OCI-LY7 (cell line): ENCODE measurements at regions of chr1 and their contacts with region 1.

Region 1: GRCh38 chr1:225977937-225978748 is 21.0 kb downstream of the SDE2 start:
- DNase-seq: peak; percentile 63
- H3K4me3 ChIP-seq: no peak overlapping the region
- H3K27ac ChIP-seq: peak overlapping the region; percentile 24
- H3K4me1 ChIP-seq: peaks cover 19% of the 10 kb centered on the region
- CTCF ChIP-seq: peak; percentile 52; the same call in 1 of the 2 replicates

Region 2: GRCh38 chr1:225318706-225319575 is 659.2 kb before region 1 on chr1:
- CTCF ChIA-PET with region 1: no interaction called
- POLR2A ChIA-PET with region 1: no interaction called
- intact Hi-C with region 1: loop called (anchors 2 kb)
- DNase-seq: peak; percentile 66
- H3K4me3 ChIP-seq: no peak overlapping the region
- H3K27ac ChIP-seq: no peak overlapping the region
- H3K4me1 ChIP-seq: no peaks in the 10 kb centered on the region
- CTCF ChIP-seq: peak; percentile 94

Region 3: GRCh38 chr1:225554216-225554812 is 423.8 kb before region 1 on chr1:
- CTCF ChIA-PET with region 1: no interaction called
- POLR2A ChIA-PET with region 1: no interaction called
- intact Hi-C with region 1: loop called (anchors 2 kb)
- DNase-seq: peak; percentile 56
- H3K4me3 ChIP-seq: no peak overlapping the region
- H3K27ac ChIP-seq: no peak overlapping the region
- H3K4me1 ChIP-seq: no peaks in the 10 kb centered on the region
- CTCF ChIP-seq: peak; percentile 94

Region 4: DNA sequence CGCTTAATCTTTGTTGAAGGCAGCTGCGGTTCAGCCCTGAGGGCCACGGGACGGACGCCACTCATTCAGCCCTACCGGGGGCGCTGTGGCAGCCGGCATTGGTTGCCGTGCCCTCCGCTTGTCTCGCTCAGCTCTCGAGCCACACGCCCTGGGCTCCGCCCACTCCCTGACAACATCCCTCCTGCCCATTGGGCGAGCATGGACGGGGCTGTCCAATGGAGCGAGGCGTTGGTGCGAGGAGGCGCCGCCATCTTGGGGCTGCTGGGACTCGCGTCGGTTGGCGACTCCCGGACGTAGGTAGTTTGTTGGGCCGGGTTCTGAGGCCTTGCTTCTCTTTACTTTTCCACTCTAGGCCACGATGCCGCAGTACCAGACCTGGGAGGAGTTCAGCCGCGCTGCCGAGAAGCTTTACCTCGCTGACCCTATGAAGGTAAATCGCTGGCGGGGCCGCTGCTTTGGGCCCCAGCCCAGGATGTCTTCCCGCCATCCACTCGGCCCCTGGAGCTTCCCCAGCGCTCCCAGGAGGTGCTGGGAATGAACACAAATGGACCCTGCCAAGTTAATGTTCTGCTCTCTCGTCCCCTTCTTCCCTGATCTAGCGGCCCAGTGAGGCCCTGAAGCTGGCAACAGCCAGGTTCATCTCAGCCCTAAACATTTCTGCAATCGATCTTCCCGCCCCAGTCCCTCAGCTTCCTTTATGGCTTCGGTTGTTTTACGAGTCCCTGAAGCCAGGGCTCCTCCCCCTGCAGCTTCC is 200.4 kb before region 1 on chr1 and contains the start of gene SRP9:
- CTCF ChIA-PET with region 1: no interaction called
- POLR2A ChIA-PET with region 1: interaction called, 5 read pairs
- intact Hi-C with region 1: loop called (anchors 1 kb)
- DNase-seq: peak; percentile 100
- H3K4me3 ChIP-seq: peak within 1 kb of the TSS; percentile 78
- H3K27ac ChIP-seq: peak within 1 kb of the TSS; percentile 91
- H3K4me1 ChIP-seq: peaks cover 56% of the 10 kb centered on the region
- CTCF ChIP-seq: peak; percentile 91
- total RNA-seq, gene SRP9: 182 and 221 TPM in 2 replicates

Region 5: DNA sequence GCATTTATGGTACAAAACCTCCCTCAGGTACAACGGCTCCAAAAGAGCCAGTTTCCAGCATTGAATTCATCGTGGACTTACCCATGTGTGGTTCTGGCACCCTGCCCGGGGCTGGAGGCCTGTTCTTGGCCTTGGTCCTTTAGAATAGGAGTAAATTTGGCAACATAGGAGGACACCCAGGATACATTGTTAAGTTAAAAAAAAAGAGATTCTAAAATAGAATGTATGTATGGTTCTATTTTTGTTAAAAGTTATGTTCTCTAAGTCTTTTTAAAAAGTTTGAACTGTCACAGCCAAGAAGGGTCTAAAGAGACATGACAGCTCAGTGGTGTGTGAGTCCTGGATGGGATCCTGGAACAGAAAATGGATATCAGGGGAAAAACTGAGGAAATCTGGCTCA is 142.3 kb before region 1 on chr1:
- CTCF ChIA-PET with region 1: no interaction called
- POLR2A ChIA-PET with region 1: no interaction called
- intact Hi-C with region 1: no loop called
- DNase-seq: no peak
- H3K4me3 ChIP-seq: no peak overlapping the region
- H3K27ac ChIP-seq: no peak overlapping the region
- H3K4me1 ChIP-seq: no peaks in the 10 kb centered on the region
- CTCF ChIP-seq: no peak

Region 6: DNA sequence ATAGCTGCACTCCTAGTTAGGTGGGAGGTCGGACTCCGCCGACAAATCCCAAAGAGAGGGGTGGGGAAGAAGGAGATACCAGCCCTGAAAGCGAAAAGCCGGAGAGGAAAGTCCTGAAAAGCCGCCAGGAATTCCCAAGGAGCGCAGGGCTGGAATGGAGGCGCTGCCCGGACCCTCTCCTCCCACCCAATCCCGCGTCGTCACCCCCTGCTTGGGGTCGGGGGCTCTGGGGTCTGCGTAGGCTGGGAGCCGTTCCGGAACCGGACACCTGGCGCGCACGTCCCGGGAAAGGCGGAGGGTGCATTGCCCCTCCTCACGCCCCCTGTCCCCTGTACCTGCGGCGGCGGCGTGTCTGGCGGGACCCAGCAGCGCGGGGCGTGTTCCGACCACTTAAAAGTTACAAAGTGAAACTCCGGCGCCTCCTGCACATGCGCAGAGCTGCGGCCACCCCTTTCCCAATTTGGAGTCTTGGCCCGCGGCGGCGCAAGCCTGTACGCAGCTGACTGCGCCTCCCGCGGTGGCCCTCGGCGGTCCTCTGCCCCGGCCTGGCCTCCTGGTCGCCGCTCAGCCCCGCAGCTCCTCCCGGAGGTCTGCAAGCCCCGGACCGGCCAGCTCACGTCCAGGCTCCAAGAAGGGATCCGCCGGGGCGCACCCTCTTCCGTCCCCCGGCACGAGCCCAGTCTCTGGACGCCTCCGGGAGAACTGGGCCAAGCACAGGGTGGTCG is 96.0 kb before region 1 on chr1 and contains the start of gene TMEM63A:
- CTCF ChIA-PET with region 1: no interaction called
- POLR2A ChIA-PET with region 1: no interaction called
- intact Hi-C with region 1: loop called (anchors 2 kb)
- DNase-seq: peak; percentile 86
- H3K4me3 ChIP-seq: peak within 1 kb of the TSS; percentile 83
- H3K27ac ChIP-seq: peak within 1 kb of the TSS; percentile 32
- H3K4me1 ChIP-seq: peaks cover 47% of the 10 kb centered on the region
- CTCF ChIP-seq: peak; percentile 47; the same call in 1 of the 2 replicates
- total RNA-seq, gene TMEM63A: 20.9 and 21.0 TPM in 2 replicates